Activated B cell treated with CpG ODN at 0.5 μM for 24 hours (primary cell): ENCODE measurements at regions of chr6 and their contacts with region 1.

Region 1: DNA sequence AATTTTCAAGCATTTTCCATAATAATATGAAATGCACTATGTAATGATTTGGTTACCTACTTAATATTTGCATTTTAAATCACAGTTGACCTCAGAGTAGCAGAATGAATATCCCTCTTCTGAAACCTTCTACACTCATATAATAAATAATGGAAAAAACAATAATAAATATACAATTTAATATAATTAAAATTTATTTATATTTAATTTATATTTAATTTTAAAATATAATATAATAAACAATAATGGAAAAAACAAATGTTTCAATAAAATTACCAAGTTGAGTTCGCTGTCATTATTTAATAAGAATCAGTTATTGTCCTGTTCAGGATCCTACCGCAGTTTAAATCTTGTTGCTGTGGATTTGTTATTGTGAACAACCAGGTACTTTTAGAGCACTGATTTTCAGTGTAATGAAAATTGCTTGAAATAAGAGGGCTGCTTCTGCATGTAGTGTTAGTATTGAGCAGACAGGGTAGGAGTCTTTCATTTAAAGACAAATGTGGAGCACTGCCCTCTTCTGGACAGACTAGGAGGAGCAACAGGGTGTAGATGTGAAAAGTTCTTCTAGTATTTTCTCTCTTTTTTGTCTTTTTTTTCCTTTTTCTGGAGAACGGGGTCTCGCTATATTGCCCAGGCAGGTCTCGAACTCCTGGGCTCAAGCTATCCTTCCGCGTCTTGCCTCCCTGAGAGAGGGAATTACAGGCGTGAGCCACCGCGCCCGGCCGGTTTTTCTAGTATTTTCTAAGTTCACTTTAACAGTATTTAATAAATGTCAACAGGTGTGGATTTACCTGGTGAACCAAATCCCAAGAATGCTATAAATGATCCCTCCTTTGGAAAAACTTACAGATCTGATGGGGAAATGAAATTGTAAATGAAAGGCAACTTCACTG is 13.6 kb downstream of the TRAPPC3L start:
- DNase-seq: no peak
- ATAC-seq: peak; percentile 95
- H3K4me3 Mint-ChIP-seq: no peak overlapping the region
- H3K27ac Mint-ChIP-seq: no peak overlapping the region
- H3K4me1 Mint-ChIP-seq: peaks cover 8% of the 10 kb centered on the region
- H3K27me3 Mint-ChIP-seq: peaks cover 4% of the 10 kb centered on the region
- CTCF ChIP-seq: peak; percentile 86

Region 2: GRCh38 chr6:116268589-116269293 is 263.2 kb before region 1 on chr6:
- CTCF ChIA-PET with region 1: interaction called, 35 read pairs
- POLR2A ChIA-PET with region 1: no interaction called
- intact Hi-C with region 1: loop called (anchors 1 kb)
- DNase-seq: no peak
- ATAC-seq: peak; percentile 91
- H3K4me3 Mint-ChIP-seq: no peak overlapping the region
- H3K27ac Mint-ChIP-seq: no peak overlapping the region
- H3K4me1 Mint-ChIP-seq: peaks cover 17% of the 10 kb centered on the region
- H3K27me3 Mint-ChIP-seq: no peaks in the 10 kb centered on the region
- CTCF ChIP-seq: peak; percentile 28

Region 3: DNA sequence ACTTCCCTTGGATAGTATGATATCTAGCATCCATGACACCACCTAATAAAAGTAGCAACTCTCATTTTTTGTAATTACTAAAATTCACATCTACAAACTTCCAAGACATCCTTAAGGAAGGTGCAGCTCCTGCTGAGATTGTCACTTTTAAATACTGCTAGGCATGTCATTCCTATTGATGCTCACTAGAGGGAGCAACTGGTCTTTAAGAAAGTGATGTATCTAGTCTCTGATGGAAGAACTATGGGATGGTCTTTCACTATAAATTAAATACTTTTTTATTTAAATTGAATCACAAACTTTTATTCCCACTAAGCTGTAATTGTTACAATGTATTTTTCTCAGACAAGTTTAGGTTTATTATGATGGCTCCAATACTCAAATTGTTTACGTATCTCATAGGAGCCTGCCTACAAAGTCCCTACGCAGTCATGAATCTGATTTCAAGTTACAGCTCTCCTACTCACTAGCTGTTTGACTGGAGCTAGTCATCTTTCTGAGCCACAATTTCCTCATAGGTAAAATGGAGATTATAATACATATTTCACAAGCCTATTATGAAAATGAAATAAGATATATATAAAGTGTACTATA is 244.1 kb before region 1 on chr6:
- CTCF ChIA-PET with region 1: interaction called, 88 read pairs
- POLR2A ChIA-PET with region 1: no interaction called
- intact Hi-C with region 1: loop called (anchors 1 kb)
- DNase-seq: no peak
- ATAC-seq: peak; percentile 88
- H3K4me3 Mint-ChIP-seq: no peak overlapping the region
- H3K27ac Mint-ChIP-seq: no peak overlapping the region
- H3K4me1 Mint-ChIP-seq: peaks cover 5% of the 10 kb centered on the region
- H3K27me3 Mint-ChIP-seq: no peaks in the 10 kb centered on the region
- CTCF ChIP-seq: peak; percentile 98

Region 4: DNA sequence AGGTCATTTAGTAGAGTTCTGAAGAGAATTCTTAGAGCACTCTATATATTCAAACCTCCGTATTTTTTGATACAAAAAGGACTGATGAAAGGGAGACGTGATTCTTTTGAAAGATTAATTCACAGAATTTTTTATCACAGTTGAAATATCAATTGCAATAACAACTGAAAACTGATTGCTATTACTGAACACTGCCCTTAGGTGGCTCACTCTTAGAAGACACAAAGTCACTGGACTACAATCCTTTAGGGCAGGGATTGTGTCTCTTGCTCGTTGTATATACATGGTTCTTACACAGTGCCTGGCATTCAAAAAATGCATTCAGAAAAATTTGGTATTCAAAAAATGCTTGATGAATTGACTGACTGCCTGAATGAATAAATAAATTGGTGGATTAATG is 87.8 kb before region 1 on chr6:
- CTCF ChIA-PET with region 1: interaction called, 33 read pairs
- POLR2A ChIA-PET with region 1: no interaction called
- intact Hi-C with region 1: loop called (anchors 1 kb)
- DNase-seq: no peak
- ATAC-seq: peak; percentile 78
- H3K4me3 Mint-ChIP-seq: no peak overlapping the region
- H3K27ac Mint-ChIP-seq: no peak overlapping the region
- H3K4me1 Mint-ChIP-seq: peaks cover 26% of the 10 kb centered on the region
- H3K27me3 Mint-ChIP-seq: no peaks in the 10 kb centered on the region
- CTCF ChIP-seq: no peak

Region 5: DNA sequence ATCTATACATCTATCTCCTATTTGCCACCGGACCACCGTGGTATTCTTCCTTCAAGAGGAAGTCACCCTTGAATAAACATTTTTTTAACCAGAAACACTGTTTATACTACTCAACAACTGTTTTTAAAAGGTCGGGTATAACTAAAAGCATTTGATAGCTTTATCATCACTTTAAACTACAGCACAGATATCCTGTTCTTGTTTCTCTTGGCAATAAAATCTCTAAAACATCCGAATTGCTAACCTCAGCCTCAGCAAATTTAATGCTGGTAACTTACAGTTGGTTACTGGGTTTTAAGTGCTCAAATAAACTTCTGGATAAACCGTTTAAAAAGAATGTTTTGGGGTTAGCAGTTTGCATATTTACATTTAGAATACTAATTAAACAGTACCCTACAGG is 116.2 kb after region 1 on chr6:
- CTCF ChIA-PET with region 1: interaction called, 6 read pairs
- POLR2A ChIA-PET with region 1: no interaction called
- intact Hi-C with region 1: loop called (anchors 1 kb)
- DNase-seq: no peak
- ATAC-seq: no peak
- H3K4me3 Mint-ChIP-seq: no peak overlapping the region
- H3K27ac Mint-ChIP-seq: no peak overlapping the region
- H3K4me1 Mint-ChIP-seq: peaks cover 2% of the 10 kb centered on the region
- H3K27me3 Mint-ChIP-seq: no peaks in the 10 kb centered on the region
- CTCF ChIP-seq: no peak

Region 6: GRCh38 chr6:116969211-116969863 is 437.4 kb after region 1 on chr6:
- CTCF ChIA-PET with region 1: no interaction called
- POLR2A ChIA-PET with region 1: no interaction called
- intact Hi-C with region 1: loop called (anchors 5 kb)
- DNase-seq: no peak
- ATAC-seq: no peak
- H3K4me3 Mint-ChIP-seq: no peak overlapping the region
- H3K27ac Mint-ChIP-seq: no peak overlapping the region
- H3K4me1 Mint-ChIP-seq: no peaks in the 10 kb centered on the region
- H3K27me3 Mint-ChIP-seq: peaks cover 10% of the 10 kb centered on the region
- CTCF ChIP-seq: peak; percentile 52